A673 (cell line): ENCODE measurements at regions of chr5 and their contacts with region 1.

Region 1: GRCh38 chr5:38809388-38810359 is 36.1 kb upstream of the OSMR start:
- DNase-seq: peak; percentile 94
- H3K4me3 ChIP-seq: no peak overlapping the region
- H3K27ac ChIP-seq: peak overlapping the region; percentile 66
- H3K4me1 ChIP-seq: peaks cover 40% of the 10 kb centered on the region
- H3K27me3 ChIP-seq: no peaks in the 10 kb centered on the region
- CTCF ChIP-seq: peak; percentile 91

Region 2: GRCh38 chr5:38208782-38209378 is 600.8 kb before region 1 on chr5:
- CTCF ChIA-PET with region 1: interaction called, 12 read pairs
- POLR2A ChIA-PET with region 1: no interaction called
- intact Hi-C with region 1: loop called (anchors 2 kb)
- DNase-seq: peak; percentile 65
- H3K4me3 ChIP-seq: no peak overlapping the region
- H3K27ac ChIP-seq: no peak overlapping the region
- H3K4me1 ChIP-seq: peaks cover 3% of the 10 kb centered on the region
- H3K27me3 ChIP-seq: no peaks in the 10 kb centered on the region
- CTCF ChIP-seq: peak; percentile 66

Region 3: DNA sequence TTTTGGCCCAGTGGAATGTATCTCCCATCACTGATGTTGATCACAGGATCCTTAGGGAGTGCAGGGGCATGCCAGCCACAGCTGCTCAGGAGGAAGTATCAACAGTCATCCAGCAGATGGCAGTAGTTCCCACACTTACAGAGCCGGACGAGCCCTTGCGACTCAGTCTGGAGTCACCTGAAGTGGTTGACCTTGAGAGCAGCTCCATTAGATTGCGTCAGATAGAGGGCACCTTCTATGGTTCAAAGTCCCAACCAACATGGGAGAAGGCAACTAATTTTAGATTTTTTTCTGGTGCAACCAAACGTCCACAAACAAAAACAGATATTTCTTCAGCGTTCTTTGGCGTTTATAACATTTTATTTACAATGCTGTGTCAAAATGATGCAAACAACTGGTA is 426.8 kb before region 1 on chr5:
- CTCF ChIA-PET with region 1: interaction called, 5 read pairs
- POLR2A ChIA-PET with region 1: no interaction called
- intact Hi-C with region 1: loop called (anchors 2 kb)
- DNase-seq: peak; percentile 81
- H3K4me3 ChIP-seq: no peak overlapping the region
- H3K27ac ChIP-seq: no peak overlapping the region
- H3K4me1 ChIP-seq: peaks cover 36% of the 10 kb centered on the region
- H3K27me3 ChIP-seq: no peaks in the 10 kb centered on the region
- CTCF ChIP-seq: peak; percentile 92

Region 4: DNA sequence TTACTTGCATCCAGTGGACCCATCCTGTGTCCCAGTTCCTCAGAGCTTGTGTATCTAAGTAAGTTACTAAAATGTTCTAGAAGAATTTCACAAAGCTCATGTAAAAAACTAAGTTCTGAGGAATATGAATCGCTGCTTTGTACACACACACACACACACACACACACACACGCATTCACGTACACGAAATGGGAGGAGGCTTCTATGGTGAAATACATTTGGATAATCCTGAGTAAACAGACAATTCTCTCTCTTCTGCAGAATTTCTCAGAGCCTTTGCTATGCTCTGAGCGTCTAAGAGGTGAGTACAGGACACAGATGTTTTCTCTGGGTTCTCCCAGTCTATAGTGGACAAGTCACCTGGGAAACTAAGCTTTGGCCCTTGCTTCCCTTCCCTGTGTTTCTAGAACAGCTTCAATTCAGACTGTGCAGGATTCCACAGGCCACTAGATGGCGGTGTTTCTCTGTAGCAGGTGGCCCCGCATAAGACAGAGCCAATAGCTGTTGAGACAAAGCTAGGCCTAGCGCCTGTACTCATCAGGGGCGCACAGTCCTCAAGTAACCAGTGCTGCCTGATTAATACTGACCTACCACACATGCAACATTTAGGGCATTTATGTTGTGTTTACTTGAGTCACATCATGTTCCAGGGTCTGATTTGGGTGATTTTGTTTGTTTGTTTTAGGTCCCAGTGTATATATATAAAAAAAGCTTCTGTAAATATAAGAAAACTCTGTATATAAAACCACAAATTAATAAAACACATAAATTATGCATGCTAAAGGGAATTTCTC is 368.0 kb before region 1 on chr5:
- CTCF ChIA-PET with region 1: interaction called, 151 read pairs
- POLR2A ChIA-PET with region 1: no interaction called
- intact Hi-C with region 1: loop called (anchors 1 kb)
- DNase-seq: peak; percentile 96
- H3K4me3 ChIP-seq: no peak overlapping the region
- H3K27ac ChIP-seq: no peak overlapping the region
- H3K4me1 ChIP-seq: peaks cover 11% of the 10 kb centered on the region
- H3K27me3 ChIP-seq: no peaks in the 10 kb centered on the region
- CTCF ChIP-seq: peak; percentile 97

Region 5: GRCh38 chr5:38666668-38667498 is 142.8 kb before region 1 on chr5:
- CTCF ChIA-PET with region 1: no interaction called
- POLR2A ChIA-PET with region 1: no interaction called
- intact Hi-C with region 1: loop called (anchors 5 kb)
- DNase-seq: peak; percentile 39
- H3K4me3 ChIP-seq: no peak overlapping the region
- H3K27ac ChIP-seq: no peak overlapping the region
- H3K4me1 ChIP-seq: no peaks in the 10 kb centered on the region
- H3K27me3 ChIP-seq: no peaks in the 10 kb centered on the region
- CTCF ChIP-seq: peak; percentile 71

Region 6: DNA sequence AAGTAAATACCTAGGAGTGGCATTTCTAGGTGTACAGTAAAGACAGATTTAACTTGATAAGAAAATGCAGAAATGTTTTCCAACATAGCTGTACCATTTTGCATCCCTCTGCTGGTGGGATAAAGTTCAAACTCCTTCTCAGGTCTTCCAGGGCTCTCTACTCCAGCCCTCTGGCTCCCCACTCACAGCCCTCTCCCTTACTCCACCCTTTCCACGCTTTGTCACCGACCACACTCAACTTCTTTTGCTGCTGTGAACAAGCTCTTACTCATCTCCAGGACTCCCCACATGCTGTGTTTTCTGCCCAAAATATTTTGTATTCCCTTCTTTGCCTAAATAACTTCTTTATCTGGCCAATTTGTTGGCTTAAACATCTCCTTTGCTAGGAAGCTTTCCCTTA is 54.5 kb before region 1 on chr5:
- CTCF ChIA-PET with region 1: interaction called, 5 read pairs
- POLR2A ChIA-PET with region 1: no interaction called
- intact Hi-C with region 1: loop called (anchors 1 kb)
- DNase-seq: peak; percentile 64
- H3K4me3 ChIP-seq: no peak overlapping the region
- H3K27ac ChIP-seq: no peak overlapping the region
- H3K4me1 ChIP-seq: peaks cover 12% of the 10 kb centered on the region
- H3K27me3 ChIP-seq: no peaks in the 10 kb centered on the region
- CTCF ChIP-seq: no peak